ENCODE measurements at regions of chr10 and their contacts with region 1.

Region 1: DNA sequence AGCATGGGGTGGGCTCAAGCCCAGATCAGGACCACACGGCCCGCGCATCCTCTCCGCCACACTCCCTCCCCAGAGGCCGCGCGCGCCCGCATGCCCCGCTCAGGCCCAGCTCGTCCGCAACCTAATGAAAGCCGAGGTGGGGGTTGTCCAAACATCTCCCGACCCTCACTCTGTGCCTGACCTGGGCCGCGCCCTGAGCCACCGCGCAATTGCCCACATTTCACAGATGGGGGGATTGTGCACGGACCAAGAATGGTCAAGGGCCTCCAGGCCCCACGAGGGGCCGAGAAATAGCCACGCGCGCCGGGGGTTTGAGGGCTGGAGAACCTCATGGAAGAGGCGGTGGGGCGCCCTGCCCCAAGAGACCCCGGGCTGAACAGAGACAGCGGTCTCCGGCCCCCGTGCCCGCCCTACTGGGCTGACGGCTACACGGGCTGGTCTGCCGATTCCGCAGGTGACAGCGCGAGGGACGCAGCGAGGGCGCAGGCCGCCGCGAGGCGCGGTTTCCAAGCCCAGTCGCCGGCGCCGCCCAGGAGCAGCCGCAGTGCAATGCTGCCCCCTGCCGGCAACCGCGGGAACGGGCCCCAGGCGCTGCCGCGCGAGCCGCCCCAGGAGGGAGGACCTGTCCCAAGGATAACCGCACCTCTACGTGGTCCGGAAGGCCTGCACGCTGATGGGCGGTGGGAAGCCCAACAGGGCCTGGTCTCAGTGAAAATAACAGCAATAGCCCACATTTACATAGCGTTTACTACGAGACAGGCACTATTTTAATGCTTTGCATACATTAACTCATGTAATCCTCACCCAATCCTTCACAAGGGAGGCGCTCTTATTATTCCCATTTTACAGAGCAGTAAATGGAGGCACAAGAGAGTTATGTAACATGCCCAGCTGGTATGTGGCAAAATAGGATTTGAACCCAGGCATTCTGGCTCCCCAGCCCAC is 10.5 kb upstream of the GRID1 start:
- DNase-seq: peak; percentile 88
- H3K4me3 Mint-ChIP-seq: no peak overlapping the region
- H3K27ac Mint-ChIP-seq: no peak overlapping the region
- H3K4me1 Mint-ChIP-seq: peaks cover 1% of the 10 kb centered on the region
- H3K27me3 Mint-ChIP-seq: peaks cover 15% of the 10 kb centered on the region

Region 2: DNA sequence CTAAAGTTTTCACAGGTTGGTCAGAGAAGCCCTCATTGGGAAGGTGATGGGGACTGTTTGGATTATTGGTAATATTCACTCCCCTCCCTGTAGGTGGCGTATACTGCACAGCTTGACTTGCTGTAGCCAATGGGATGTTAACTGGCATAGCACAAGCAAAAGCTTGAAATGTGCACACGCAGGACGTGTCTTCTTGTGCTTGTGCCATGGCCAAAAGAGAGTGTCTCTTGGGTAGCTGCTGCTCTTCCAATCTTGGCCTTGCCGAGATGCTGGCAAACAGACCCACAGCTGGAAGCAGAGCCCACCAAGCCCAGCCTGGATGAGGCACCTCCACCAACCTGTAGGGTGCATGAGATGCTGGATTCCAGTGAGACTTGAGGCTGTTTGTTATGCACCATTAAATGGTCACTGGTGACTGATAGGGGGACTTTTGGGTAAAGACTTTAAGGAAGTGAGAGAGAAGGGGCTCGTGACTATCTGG is 276.5 kb before region 1 on chr10:
- CTCF ChIA-PET with region 1: no interaction called
- POLR2A ChIA-PET with region 1: no interaction called
- intact Hi-C with region 1: loop called (anchors 5 kb)
- DNase-seq: no peak
- H3K4me3 Mint-ChIP-seq: no peak overlapping the region
- H3K27ac Mint-ChIP-seq: no peak overlapping the region
- H3K4me1 Mint-ChIP-seq: no peaks in the 10 kb centered on the region
- H3K27me3 Mint-ChIP-seq: no peaks in the 10 kb centered on the region

Region 3: GRCh38 chr10:86261941-86262687 is 115.0 kb before region 1 on chr10:
- CTCF ChIA-PET with region 1: interaction called, 3 read pairs
- POLR2A ChIA-PET with region 1: no interaction called
- intact Hi-C with region 1: loop called (anchors 2 kb)
- DNase-seq: peak; percentile 34
- H3K4me3 Mint-ChIP-seq: no peak overlapping the region
- H3K27ac Mint-ChIP-seq: no peak overlapping the region
- H3K4me1 Mint-ChIP-seq: peaks cover 2% of the 10 kb centered on the region
- H3K27me3 Mint-ChIP-seq: peaks cover 17% of the 10 kb centered on the region

Region 4: DNA sequence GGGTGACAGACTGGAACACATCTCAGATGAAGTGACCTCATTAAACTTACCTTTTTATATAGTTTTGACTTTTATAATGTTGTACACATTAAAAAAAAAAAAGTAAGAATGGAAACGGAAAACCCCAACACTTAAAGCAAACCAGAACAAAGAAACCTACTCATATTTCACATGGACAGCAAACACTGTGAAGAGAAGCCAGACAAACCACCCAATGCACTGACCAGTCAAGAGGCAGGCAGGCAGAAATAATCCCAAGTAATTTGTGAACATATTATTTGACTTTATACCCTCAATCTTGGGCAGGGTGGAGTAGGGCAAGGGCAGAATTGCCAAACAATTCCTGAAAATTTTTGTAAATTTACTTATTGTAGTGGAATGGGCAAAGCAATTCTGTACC is 104.6 kb after region 1 on chr10:
- CTCF ChIA-PET with region 1: no interaction called
- POLR2A ChIA-PET with region 1: no interaction called
- intact Hi-C with region 1: no loop called
- DNase-seq: no peak
- H3K4me3 Mint-ChIP-seq: no peak overlapping the region
- H3K27ac Mint-ChIP-seq: no peak overlapping the region
- H3K4me1 Mint-ChIP-seq: peaks cover 4% of the 10 kb centered on the region
- H3K27me3 Mint-ChIP-seq: no peaks in the 10 kb centered on the region

Measured in activated CD4-positive, alpha-beta memory T cell treated with anti-CD3 and anti-CD28 coated beads for 36 hours (primary cell).